Esophagus squamous epithelium (tissue), 5 donors: ENCODE measurements at regions of chr6 and their contacts with region 1.

Region 1: GRCh38 chr6:100116411-100117194 is 122.6 kb upstream of the MCHR2 start:
- DNase-seq: no peak
- H3K4me3 ChIP-seq: no peak overlapping the region
- H3K27ac ChIP-seq: no peak overlapping the region
- H3K4me1 ChIP-seq: no peaks in the 10 kb centered on the region
- H3K27me3 ChIP-seq: peaks cover 0 to 5% (median 0%) of the 10 kb centered on the region in 4 donors
- CTCF ChIP-seq: peak in 5 of 6 experiments; percentile 49 to 61 (median 59)
- POLR2A ChIP-seq: no peak

Region 2: DNA sequence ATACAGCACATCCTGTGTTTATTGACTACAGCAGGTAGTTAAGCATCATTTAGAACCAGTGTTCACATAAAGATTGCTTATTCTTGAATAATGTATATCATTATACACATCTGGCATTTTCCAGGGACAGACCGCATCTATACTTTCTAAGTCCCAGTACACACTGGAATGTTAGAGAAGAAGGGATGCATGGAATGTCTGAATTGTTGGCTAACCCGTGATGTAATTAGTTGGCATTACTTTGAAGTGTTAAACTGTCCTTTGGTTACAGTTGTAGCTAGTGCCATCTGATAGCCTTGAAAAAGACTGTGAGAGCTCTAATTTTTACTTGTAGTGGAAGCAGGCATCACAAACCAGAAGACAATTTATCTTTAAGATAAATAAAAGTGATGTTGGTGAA is 92.8 kb before region 1 on chr6:
- intact Hi-C with region 1: no loop called
- DNase-seq: no peak
- H3K4me3 ChIP-seq: no peak overlapping the region
- H3K27ac ChIP-seq: no peak overlapping the region
- H3K4me1 ChIP-seq: no peaks in the 10 kb centered on the region
- H3K27me3 ChIP-seq: no peaks in the 10 kb centered on the region
- CTCF ChIP-seq: no peak
- POLR2A ChIP-seq: no peak

Region 3: GRCh38 chr6:100185615-100186014 is 69.0 kb after region 1 on chr6:
- intact Hi-C with region 1: no loop called
- DNase-seq: no peak
- H3K4me3 ChIP-seq: no peak overlapping the region
- H3K27ac ChIP-seq: no peak overlapping the region
- H3K4me1 ChIP-seq: no peaks in the 10 kb centered on the region
- H3K27me3 ChIP-seq: no peaks in the 10 kb centered on the region
- CTCF ChIP-seq: no peak
- POLR2A ChIP-seq: no peak

Region 4: GRCh38 chr6:100479179-100480035 is 362.8 kb after region 1 on chr6:
- intact Hi-C with region 1: loop called (anchors 5 kb)
- DNase-seq: no peak
- H3K4me3 ChIP-seq: no peak overlapping the region
- H3K27ac ChIP-seq: no peak overlapping the region
- H3K4me1 ChIP-seq: no peaks in the 10 kb centered on the region
- H3K27me3 ChIP-seq: peaks cover 0 to 67% (median 0%) of the 10 kb centered on the region in 4 donors
- CTCF ChIP-seq: peak; percentile 21 to 69 (median 54)
- POLR2A ChIP-seq: no peak